ENCODE measurements at regions of chr18 and their contacts with region 1.

Region 1: DNA sequence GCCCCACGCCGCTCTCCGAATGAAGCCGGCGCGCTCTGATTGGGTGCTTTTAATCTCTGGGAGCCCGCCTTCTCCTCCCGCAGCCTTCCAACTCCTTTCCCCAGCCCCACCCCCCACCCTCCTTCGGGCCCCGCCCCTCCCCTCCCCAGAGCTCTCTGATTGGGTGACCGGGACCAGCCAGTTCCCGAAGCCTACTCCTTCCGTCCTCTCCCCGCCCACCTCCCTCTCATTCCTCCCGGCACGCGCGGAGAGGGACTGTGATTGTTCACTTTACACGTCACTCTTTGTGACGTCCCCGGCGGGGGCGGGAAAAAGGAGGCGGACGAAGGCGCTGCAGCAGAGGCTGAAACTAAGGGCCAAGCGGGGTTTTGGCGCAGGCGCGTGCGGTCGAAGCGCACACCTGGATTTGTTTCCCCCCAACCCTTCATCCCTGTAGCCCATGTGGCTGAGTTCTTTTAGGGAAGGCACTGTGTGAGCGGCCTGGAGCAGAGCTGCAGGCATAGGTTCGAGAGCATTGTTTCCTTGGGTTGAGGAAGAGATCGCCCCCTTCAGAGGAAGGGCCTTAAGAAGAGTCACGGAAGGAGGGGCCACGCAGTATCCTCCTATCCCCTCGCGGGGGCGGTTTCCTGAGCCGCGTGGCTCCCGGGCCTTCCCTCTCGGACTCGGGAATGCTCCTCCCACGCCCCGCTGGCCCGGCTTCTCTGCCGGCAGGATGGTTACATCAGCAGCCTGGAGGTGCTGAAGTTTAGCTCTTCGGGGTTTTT is at the start of gene MEX3C:
- DNase-seq: peak; percentile 98 to 100 (median 99)

Region 2: DNA sequence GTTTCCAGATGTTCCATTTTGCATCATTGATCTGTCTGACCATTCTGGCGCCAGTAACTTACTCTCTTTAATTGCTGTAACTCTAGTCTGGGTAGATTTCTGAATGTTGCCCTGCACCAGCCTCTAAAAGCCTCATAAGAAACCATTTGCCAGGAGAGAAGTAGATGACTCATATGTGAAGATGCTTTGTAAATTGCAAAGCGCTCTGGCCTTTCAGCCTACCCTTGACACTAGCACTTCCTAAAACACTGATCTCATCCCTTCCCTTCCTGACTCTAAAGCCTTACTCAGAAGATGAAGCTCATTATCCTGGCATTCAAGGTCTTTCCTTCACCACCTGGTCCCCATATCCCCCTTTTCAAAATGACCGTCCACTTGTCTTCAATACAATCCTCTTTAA is 192.9 kb after region 1 on chr18:
- intact Hi-C with region 1: loop called (anchors 10 kb)
- DNase-seq: no peak

Measured in posterior cingulate gyrus (tissue), 11 donors.